ENCODE measurements at regions of chr2 and their contacts with region 1.

Region 1: GRCh38 chr2:177263451-177264208 is 897 bp downstream of the NFE2L2 start:
- DNase-seq: peak; percentile 97
- H3K4me3 ChIP-seq: peak overlapping the region; percentile 79 to 98 (median 90)
- H3K27ac ChIP-seq: peak overlapping the region; percentile 94
- H3K4me1 ChIP-seq: peaks cover 27% of the 10 kb centered on the region
- H3K27me3 ChIP-seq: no peaks in the 10 kb centered on the region
- CTCF ChIP-seq: peak; percentile 91 to 98
- POLR2A ChIP-seq: peak; percentile 84

Region 2: DNA sequence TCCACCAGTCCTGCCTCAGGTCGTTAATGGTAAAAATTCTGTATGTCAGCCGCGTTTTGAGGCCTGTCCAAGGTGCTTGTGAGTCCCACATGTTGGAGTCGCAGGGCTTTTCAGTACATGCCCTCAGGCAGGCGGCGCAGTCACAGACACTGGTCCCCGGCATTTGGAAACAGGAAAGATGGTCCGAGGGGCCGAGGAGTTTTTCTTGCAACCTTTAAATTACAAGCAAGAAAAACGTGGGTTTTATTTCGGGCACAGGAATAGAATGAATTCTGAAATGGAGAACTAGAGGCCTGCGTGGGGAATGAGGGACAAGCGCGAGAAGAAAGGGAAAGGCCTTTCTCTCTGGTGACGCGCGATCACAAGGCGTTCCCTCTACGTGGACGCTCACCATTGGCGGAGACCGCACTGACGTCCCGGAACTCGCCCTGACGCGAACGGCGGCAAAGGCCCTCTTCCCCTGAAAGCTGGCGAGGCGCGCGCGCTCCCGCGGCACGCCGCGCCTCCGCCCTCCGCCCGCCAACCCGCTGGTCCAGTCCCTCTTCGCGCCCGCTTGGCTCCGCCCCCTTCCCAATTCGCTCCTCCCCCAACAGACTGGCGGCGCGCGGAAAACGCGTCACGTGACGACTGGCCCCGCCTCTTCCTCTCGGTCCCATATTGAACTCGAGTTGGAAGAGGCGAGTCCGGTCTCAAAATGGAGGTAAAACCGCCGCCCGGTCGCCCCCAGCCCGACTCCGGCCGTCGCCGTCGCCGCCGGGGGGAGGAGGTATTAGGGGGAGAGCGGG is 51.3 kb before region 1 on chr2 and contains the start of gene HNRNPA3:
- CTCF ChIA-PET with region 1: interaction called, 6 read pairs
- POLR2A ChIA-PET with region 1: interaction called, 12 read pairs
- dilution Hi-C with region 1: no loop called
- intact Hi-C with region 1: loop called (anchors 1 kb)
- DNase-seq: peak; percentile 100
- H3K4me3 ChIP-seq: peak within 1 kb of the TSS; percentile 99 to 100 (median 100)
- H3K27ac ChIP-seq: peak within 1 kb of the TSS; percentile 100
- H3K4me1 ChIP-seq: peaks cover 33% of the 10 kb centered on the region
- H3K27me3 ChIP-seq: no peaks in the 10 kb centered on the region
- CTCF ChIP-seq: peak in 1 of 2 donors; percentile 2
- POLR2A ChIP-seq: peak; percentile 97
- total RNA-seq, gene HNRNPA3: 316 and 322 TPM in 2 replicates

Region 3: GRCh38 chr2:177275041-177276020 is 11.7 kb after region 1 on chr2:
- CTCF ChIA-PET with region 1: interaction called, 18 read pairs
- POLR2A ChIA-PET with region 1: interaction called, 3 read pairs
- dilution Hi-C with region 1: no loop called
- intact Hi-C with region 1: loop called (anchors 1 kb)
- DNase-seq: peak; percentile 86
- H3K4me3 ChIP-seq: peak overlapping the region in 1 of 3 experiments; percentile 27
- H3K27ac ChIP-seq: peak overlapping the region; percentile 39
- H3K4me1 ChIP-seq: peaks cover 25% of the 10 kb centered on the region
- H3K27me3 ChIP-seq: no peaks in the 10 kb centered on the region
- CTCF ChIP-seq: no peak
- POLR2A ChIP-seq: no peak

Region 4: DNA sequence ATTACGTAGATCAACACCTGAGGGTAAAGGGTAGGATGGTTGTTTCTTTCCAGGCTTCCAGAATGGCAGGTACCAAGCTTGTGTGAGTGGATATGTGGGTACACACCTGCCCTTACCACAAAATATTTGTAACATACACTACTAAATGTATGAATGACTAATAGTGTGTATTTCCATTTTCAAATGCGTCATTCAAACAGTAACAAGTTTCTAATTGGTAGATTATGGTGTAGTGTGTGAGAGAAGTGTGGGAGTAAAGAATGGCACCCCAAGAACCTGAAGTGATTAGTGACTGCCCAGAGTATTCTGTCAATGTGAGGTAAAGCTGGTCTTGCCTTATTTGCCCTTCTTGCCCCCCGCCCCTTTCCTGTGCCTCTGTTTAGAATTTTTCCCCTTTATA is 150.1 kb after region 1 on chr2:
- CTCF ChIA-PET with region 1: interaction called, 45 read pairs
- POLR2A ChIA-PET with region 1: no interaction called
- dilution Hi-C with region 1: no loop called
- intact Hi-C with region 1: loop called (anchors 1 kb)
- DNase-seq: no peak
- H3K4me3 ChIP-seq: no peak overlapping the region
- H3K27ac ChIP-seq: no peak overlapping the region
- H3K4me1 ChIP-seq: peaks cover 13% of the 10 kb centered on the region
- H3K27me3 ChIP-seq: no peaks in the 10 kb centered on the region
- CTCF ChIP-seq: no peak
- POLR2A ChIP-seq: no peak

Region 5: DNA sequence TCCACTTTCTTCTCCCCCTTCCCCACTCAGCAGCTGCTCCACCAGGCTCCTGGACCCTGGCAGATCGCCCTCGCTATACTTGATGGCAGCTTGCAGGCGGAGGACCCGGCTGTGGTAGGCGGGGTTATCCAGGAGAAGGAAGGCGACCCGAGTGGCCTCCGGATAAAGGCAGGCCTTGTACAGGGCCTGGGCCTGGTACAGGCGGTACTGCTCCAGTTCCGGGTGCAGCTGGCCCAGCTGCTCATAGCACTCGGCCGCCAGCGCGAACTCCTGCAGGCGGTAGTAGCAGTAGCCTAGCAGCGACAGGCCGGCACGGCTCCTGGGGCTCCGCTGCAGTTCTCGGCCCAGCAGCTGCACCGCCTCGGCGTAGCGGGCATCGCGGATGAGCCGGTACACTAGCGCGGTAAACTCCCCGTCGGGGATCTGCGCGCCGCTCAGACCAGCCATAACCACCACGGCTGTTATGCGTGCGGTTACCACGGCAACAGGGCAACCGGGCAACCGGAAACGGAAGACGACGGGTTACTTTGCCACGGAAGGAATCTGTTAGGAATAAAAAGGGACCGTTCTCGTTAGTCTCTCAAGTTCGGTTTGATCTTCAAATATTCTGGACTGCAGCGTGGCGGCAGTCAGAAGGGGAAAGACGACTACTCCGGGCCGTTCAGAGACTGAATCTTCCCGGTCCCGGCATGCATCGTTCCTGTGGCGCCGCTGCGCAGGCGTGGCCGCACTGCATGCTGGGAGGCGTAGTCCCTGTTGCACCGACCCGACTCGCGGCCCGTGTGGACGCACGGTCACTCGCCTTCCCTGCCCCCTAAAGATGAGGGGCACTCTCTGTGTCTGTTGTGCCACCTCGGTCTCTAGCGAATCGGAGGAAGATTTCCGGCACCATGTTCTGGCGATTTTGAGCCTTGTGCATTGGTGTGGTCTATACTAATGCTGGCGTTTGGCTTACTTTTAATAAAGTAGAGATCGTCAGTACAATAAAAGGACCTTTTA is 354.9 kb after region 1 on chr2:
- CTCF ChIA-PET with region 1: no interaction called
- POLR2A ChIA-PET with region 1: no interaction called
- dilution Hi-C with region 1: no loop called
- intact Hi-C with region 1: loop called (anchors 2 kb)
- DNase-seq: peak; percentile 94
- H3K4me3 ChIP-seq: peak overlapping the region; percentile 28 to 94 (median 46)
- H3K27ac ChIP-seq: peak overlapping the region; percentile 76
- H3K4me1 ChIP-seq: no peaks in the 10 kb centered on the region
- H3K27me3 ChIP-seq: no peaks in the 10 kb centered on the region
- CTCF ChIP-seq: no peak
- POLR2A ChIP-seq: peak; percentile 76